ENCODE measurements at regions of chr9 and their contacts with region 1.

Region 1: DNA sequence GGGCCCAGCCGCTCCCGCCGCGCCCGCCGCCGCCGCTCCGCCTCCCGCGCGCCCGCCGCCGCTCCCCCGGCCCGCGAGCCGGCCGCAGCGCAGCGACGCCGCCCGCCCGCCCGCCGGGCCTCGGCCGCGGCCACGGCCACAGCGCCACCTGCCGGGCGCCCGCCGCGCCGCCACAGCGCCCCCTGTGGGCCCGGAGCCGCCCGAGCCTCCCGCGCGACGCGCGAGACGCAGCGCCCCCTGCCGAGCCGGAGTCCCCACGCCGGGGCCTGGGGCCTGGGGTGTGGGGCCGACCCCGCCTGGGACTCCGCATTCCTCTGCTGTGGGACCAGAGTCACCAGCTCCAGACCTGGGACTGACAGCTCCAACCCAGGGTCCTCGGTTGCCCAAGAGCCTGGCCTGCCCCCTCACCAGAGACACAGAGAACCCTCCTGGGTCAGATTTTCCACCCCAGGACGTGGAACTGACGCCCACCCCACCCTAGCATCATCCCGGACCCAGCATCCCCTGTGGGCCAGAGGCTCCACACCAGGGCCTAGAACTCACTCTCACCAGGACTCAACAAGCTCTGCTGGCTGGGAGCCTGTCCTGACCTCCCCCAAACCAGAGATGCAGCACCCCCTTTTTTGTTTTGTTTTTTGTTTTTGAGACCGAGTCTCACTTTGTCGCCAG is at the start of gene RAPGEF1:
- DNase-seq: peak; percentile 72 to 92 (median 78)
- ATAC-seq: peak; percentile 54 to 82 (median 68)
- H3K4me3 ChIP-seq: peak within 1 kb of the TSS; percentile 29 to 93 (median 72)
- H3K27ac ChIP-seq: peak within 1 kb of the TSS; percentile 80 to 96 (median 88)
- H3K4me1 ChIP-seq: peaks cover 3 to 55% (median 37%) of the 10 kb centered on the region in 12 donors
- H3K27me3 ChIP-seq: no peaks in the 10 kb centered on the region
- CTCF ChIP-seq: peak; percentile 69 to 96 (median 87)
- POLR2A ChIP-seq: no peak
- total RNA-seq, gene RAPGEF1: 81.9 to 161 (median 116) TPM

Region 2: DNA sequence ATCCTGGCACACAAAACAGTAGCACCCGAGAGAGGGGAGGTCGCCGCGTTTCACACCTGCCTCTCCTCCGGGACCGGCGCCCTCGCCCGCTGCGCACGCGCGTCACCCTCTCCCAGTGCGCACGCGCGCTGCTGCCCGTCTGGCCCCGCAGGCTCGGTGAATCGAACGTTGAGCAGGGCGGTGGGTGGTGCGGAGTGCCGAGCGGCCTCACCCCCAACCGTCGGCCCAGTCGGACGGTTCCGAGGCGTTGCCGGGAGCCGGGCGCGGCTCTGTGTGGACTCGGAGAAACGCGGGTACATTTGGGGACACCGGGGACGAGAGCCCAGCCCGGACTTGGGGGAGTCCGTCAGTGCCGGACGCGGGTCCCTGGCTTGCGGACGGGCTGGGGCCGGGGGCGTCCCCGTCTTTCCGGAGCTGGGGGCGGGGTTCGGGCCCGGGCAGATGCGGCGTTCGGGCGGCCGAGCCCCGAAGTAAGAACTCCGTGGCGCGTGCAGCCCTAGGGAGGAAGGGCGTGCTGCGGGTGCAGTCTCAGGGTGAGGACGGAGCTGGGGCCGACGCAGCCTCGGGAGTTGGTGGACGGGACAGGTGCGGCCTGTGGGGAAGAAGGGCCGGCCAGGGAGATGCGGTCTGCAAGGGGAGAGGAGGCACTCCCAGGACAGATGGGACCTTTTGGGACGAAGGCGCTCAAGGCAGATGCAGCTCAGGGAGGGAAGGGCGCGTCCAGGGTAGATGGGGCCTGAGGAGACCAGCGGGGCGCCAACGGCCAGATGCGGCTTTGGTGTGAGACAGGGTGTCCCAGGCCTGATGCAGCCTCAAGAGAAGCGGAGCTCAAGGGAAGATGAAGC is 237.1 kb before region 1 on chr9 and contains the start of gene POMT1:
- intact Hi-C with region 1: loop called in 2 of 10 experiments (anchors 10 kb)
- DNase-seq: peak; percentile 88 to 95 (median 92)
- ATAC-seq: peak; percentile 79 to 96 (median 94)
- H3K4me3 ChIP-seq: peak within 1 kb of the TSS; percentile 67 to 99 (median 89)
- H3K27ac ChIP-seq: peak within 1 kb of the TSS in 11 of 12 donors; percentile 59 to 85 (median 81)
- H3K4me1 ChIP-seq: peaks cover 0 to 25% (median 17%) of the 10 kb centered on the region in 12 donors
- H3K27me3 ChIP-seq: no peaks in the 10 kb centered on the region
- CTCF ChIP-seq: no peak
- POLR2A ChIP-seq: peak in 1 of 2 donors; percentile 67
- total RNA-seq, gene POMT1: 15.3 to 28.8 (median 20.3) TPM

Region 3: DNA sequence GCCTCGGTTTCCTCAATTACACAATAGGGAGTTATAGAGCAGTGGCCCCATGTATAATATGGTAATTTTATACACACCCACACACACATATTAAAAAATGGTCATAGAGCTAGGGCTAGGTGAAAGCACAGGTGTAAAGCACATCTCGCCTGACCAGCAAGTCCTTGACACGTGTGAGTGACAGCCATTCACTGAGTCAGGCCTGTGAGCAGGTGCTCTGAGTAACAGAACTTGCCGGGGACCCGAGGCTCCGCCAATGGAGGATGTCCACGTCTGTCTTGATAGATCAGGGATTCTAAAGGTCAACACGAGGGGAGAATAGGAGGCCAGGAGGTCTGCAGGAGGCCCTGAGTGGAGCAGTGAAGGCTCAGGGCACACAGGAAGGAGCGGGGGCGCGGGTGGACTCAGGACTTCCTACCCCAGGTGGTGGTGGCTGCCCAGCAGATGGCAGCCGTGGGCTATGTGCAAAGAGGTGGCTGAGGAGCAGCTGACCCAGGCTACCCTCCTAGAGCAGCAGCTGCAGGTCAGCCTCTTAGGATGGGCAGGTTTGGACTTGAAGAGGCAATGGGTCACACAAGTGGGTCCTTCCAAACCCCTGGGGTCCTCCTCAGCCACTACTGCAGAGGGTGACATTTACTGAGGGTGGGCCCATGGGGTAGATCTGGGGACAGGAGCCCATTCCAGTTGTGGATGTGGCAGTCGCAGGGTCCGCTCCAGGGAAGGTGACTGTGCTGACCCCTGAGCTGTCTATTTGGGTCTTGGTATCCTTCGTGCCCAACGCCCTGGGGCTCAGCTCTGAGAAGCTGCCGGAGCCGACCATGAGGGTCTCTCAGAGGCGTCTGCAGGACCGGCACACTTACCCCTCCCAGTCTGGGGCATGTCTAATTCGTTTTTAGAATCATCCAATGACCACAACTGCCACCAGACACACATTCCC is 148.9 kb before region 1 on chr9:
- intact Hi-C with region 1: loop called (anchors 1 to 2 kb)
- DNase-seq: peak; percentile 73 to 90 (median 85)
- ATAC-seq: peak; percentile 83 to 92 (median 88)
- H3K4me3 ChIP-seq: no peak overlapping the region
- H3K27ac ChIP-seq: peak overlapping the region in 1 of 12 donors; percentile 6
- H3K4me1 ChIP-seq: peaks cover 0 to 27% (median 0%) of the 10 kb centered on the region in 12 donors
- H3K27me3 ChIP-seq: no peaks in the 10 kb centered on the region
- CTCF ChIP-seq: peak; percentile 73 to 91 (median 83)
- POLR2A ChIP-seq: no peak

Region 4: GRCh38 chr9:131627648-131628458 is 112.3 kb before region 1 on chr9:
- intact Hi-C with region 1: loop called in 1 of 10 experiments (anchors 10 kb)
- DNase-seq: peak in 2 of 5 donors; percentile 50 to 85
- ATAC-seq: peak; percentile 21 to 56 (median 43)
- H3K4me3 ChIP-seq: peak overlapping the region in 1 of 12 donors; percentile 2
- H3K27ac ChIP-seq: peak overlapping the region in 7 of 12 donors; percentile 10 to 91 (median 43)
- H3K4me1 ChIP-seq: peaks cover 11 to 71% (median 38%) of the 10 kb centered on the region in 12 donors
- H3K27me3 ChIP-seq: no peaks in the 10 kb centered on the region
- CTCF ChIP-seq: no peak
- POLR2A ChIP-seq: no peak

Region 5: GRCh38 chr9:131678499-131679111 is 61.5 kb before region 1 on chr9:
- intact Hi-C with region 1: loop called in 7 of 10 experiments (anchors 5 to 10 kb)
- DNase-seq: peak; percentile 71 to 91 (median 84)
- ATAC-seq: peak; percentile 86 to 98 (median 95)
- H3K4me3 ChIP-seq: peak overlapping the region in 1 of 12 donors; percentile 21
- H3K27ac ChIP-seq: peak overlapping the region; percentile 67 to 93 (median 86)
- H3K4me1 ChIP-seq: peaks cover 30 to 100% (median 81%) of the 10 kb centered on the region in 12 donors
- H3K27me3 ChIP-seq: no peaks in the 10 kb centered on the region
- CTCF ChIP-seq: no peak
- POLR2A ChIP-seq: peak in 1 of 2 donors; percentile 53